ENCODE measurements at regions of chr19 and their contacts with region 1.

Region 1: GRCh38 chr19:35055715-35056179 is 14.2 kb downstream of the HPN start:
- DNase-seq: no peak

Region 2: DNA sequence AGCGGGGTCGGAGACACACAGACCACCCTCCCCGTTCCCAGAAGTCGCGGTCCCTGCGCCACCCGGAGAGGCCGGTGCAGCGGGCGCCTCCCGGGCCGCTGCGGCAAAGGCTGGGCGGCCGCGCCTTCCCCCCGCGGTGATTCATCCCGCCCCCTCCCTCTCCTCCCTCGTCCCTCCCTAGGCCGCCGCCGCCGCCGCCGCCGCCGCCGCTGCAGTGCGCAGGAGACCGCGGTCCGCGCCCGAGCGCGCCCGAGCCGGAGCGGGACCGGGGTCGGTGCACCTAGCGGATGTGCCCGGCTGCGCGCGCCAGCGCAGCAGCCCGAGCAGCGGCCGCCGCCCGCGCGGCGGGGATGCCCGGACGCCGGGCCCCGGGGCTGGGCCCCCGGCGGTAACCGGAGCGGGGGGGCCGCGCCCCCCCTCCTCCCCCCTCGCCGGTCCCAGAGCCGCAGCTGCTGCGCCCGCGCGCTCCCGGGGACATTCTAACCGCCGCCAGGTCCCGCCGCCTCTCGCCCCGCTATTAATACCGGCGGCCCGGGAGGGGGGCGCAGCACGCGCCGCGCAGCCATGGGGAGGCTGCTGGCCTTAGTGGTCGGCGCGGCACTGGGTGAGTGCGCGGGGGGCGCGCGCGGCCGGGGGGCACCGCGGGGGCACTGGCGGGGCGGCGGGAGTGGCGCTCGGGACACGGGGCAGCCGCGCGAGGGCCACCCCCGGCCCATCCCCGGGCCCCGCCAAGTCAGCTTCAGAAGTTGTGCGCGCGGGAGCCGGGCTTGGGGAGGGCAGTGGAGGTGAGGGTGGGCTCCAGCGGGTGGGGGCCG is 25.3 kb before region 1 on chr19 and contains the start of gene SCN1B:
- CTCF ChIA-PET with region 1: no interaction called
- POLR2A ChIA-PET with region 1: no interaction called
- DNase-seq: peak; percentile 75

Region 3: GRCh38 chr19:35044317-35045117 is 11.2 kb before region 1 on chr19:
- CTCF ChIA-PET with region 1: interaction called, 10 read pairs
- POLR2A ChIA-PET with region 1: no interaction called
- DNase-seq: peak; percentile 83

Region 4: DNA sequence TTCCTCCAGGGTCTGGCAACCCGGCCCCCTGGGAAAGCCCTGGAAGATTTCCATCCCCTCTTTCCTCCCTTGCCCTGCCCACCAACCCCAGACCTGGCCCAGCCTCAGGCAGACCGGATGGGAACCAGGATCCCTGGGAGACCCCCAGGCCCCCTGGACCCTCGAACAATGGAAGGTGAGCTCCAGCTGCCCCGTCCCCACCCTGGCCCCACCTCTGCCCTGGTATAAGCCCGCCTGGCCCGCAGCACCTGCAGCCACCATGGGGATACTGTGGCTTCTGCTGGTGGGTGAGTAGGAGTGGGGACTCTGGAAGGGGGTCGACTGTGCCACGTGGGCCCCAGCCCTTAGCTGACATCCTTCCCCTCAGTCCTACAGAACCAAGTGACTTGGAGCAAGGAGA is 18.2 kb after region 1 on chr19:
- CTCF ChIA-PET with region 1: no interaction called
- POLR2A ChIA-PET with region 1: no interaction called
- DNase-seq: no peak